Right ventricle myocardium superior (tissue), 1 donor: ENCODE measurements at regions of chr18 and their contacts with region 1.

Region 1: GRCh38 chr18:45212181-45213039 is 402.9 kb upstream of the SLC14A2 start:
- DNase-seq: peak; percentile 87
- ATAC-seq: peak; percentile 99

Region 2: DNA sequence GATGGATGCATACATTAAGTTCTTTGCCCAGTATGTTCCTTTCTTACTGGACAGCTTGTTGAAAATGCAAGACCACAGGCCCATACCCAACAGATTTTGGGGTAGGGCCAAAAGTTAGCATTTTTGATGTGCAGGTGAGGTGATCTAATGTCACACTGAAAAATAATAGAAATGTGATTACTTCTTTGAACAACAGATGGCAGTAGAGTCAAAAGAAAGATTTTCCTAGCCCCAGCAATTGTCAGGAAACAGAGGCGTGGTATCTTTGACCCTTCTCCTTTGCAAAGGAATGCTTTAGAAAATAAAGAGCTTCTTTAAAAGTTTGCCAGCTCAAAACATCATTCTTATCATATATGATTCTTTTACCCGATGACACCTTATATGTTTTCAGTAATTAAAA is 1591.5 kb before region 1 on chr18:
- intact Hi-C with region 1: loop called (anchors 10 kb)
- DNase-seq: no peak
- ATAC-seq: peak; percentile 65

Region 3: DNA sequence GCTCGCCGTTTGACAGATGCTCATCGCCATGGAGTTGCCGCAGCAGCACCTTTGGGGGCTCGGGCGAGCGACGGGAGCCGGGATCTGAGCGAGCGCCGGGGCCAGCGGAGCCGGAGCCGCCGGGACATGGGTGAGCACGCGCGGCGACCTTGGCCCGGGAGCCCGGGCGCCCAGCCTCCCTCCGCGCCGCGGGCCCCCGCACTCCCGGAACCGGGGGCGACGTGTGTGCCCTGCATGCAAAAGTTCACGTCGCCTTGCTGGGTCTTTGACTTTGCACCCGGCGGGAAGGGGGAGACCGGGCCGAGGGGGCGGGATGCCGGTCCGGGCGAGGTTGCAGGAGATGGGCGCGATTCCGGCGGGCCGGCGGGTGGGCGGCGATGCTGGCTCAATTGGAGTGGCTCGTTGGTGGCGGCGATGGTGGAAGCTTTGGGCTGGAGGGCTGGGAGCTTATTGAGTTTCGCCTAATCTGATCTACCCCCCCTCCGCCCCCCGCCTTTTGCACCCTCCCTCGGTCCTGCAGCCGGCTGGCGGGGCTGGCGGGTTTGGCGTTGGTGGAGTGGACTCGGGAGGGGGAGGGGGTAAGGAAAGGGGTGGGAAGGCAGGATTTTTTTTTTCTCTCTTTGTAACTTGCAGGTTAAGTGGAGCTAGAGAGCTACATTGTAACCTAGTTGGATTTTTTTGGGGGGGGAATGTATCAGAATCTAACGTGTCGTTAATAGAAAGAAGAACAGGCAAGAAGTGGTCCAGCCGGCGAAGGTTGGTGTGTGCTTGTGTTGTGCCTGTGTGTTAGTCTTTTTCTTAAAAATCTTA is 531.9 kb before region 1 on chr18 and contains the start of gene SETBP1:
- intact Hi-C with region 1: loop called (anchors 5 kb)
- DNase-seq: peak; percentile 71
- ATAC-seq: peak; percentile 34
- total RNA-seq, gene SETBP1: 6.3 TPM